ENCODE measurements at regions of chr10 and their contacts with region 1.

Region 1: GRCh38 chr10:133124357-133125211 is 35.4 kb upstream of the KNDC1 start:
- DNase-seq: peak; percentile 53 to 69
- H3K4me3 ChIP-seq: no peak overlapping the region
- H3K27ac ChIP-seq: no peak overlapping the region
- H3K4me1 ChIP-seq: peaks cover 0 to 6% (median 0%) of the 10 kb centered on the region in 4 donors
- H3K27me3 ChIP-seq: peaks cover 0 to 53% (median 20%) of the 10 kb centered on the region in 3 donors
- CTCF ChIP-seq: peak in 5 of 7 experiments; percentile 26 to 56 (median 41)
- EP300 ChIP-seq: no peak
- POLR2A ChIP-seq: no peak

Region 2: DNA sequence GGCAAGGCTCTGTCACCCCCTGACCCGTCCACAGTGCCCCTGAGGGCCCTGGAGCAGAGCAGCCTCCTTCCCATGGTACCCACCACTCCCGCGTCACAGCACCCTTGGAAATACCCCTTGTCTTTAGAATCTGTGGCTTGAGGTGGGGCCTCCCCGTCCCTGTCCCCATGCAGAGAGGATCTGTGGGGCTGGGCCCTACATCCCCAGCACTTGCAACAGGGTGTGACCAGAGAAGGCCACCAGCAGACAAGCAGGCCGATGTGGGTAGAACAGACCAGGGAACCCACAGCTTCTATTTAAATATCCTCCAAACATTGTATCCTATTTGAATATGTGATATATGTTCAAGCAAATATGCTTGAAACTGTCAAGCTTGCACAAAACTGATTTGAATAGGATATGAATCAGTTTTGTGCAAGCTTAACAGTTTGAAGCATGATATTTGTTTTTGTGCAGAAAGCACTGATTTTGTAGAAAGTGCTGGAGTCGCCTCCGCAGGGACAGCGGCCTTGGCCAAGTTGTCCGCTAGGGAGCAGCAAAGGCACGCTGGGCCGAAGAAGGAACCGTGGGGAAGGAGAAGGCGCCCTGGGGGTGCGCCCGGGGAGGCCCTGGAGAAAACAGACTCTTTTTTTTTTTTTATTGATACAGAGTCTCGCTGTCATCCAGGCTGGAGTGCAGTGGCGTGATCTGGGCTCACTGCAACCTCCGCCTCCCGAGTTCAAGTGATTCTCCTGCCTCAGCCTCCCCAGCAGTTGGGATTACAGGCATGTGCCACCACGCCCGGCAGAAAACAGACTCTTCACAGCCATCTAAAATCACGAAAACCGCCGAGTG is 184.4 kb before region 1 on chr10:
- intact Hi-C with region 1: loop called (anchors 10 kb)
- DNase-seq: peak; percentile 43 to 78
- H3K4me3 ChIP-seq: no peak overlapping the region
- H3K27ac ChIP-seq: no peak overlapping the region
- H3K4me1 ChIP-seq: peaks cover 6 to 19% (median 18%) of the 10 kb centered on the region in 4 donors
- H3K27me3 ChIP-seq: peaks cover 3 to 68% (median 34%) of the 10 kb centered on the region in 3 donors
- CTCF ChIP-seq: peak in 5 of 7 experiments; percentile 15 to 64 (median 43)
- EP300 ChIP-seq: no peak
- POLR2A ChIP-seq: no peak

Region 3: GRCh38 chr10:133009222-133009954 is 115.2 kb before region 1 on chr10:
- intact Hi-C with region 1: no loop called
- DNase-seq: peak; percentile 76 to 78
- H3K4me3 ChIP-seq: no peak overlapping the region
- H3K27ac ChIP-seq: peak overlapping the region in 4 of 5 donors; percentile 19 to 77 (median 72)
- H3K4me1 ChIP-seq: peaks cover 0 to 34% (median 15%) of the 10 kb centered on the region in 4 donors
- H3K27me3 ChIP-seq: peaks cover 0 to 26% (median 0%) of the 10 kb centered on the region in 3 donors
- CTCF ChIP-seq: no peak
- EP300 ChIP-seq: no peak
- POLR2A ChIP-seq: no peak

Region 4: DNA sequence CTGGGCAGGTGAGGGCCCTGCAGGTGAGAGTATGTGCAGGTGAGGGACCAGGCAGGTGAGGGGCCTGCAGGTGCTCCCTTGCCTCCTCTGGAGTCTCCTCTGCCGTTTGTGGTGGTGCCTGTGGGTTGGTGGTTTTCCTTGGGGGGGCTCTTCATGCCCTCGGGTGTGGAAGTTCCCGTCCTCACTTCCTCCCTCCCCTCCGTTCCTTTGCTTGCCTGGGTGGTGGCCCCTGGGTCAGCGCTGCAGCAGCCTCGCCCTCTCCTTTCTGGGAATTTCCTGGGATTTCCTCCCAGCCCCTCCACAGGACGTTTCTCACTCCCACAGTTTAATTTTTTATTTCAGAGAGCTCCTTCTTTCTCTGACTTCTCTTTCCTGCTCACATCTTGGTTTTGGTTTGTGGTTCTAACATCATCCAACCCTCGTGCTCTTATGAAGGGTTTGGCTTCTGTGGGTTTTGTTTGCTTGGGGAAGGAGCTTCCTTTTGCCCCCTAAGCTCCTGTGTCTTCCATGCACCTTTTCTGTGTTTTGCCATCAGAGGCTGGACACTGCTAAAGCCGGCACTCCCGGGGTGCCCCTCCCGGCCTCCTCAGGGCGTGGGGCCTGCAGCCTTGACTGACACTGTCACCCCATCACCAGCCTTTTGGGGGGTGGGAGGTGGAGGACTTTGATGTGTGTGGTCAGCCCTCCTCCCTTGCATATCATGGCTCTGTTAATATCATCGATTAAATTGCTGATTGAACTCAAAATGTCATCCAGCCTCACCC is 66.1 kb before region 1 on chr10:
- intact Hi-C with region 1: no loop called
- DNase-seq: no peak
- H3K4me3 ChIP-seq: no peak overlapping the region
- H3K27ac ChIP-seq: no peak overlapping the region
- H3K4me1 ChIP-seq: no peaks in the 10 kb centered on the region
- H3K27me3 ChIP-seq: peaks cover 0 to 73% (median 7%) of the 10 kb centered on the region in 3 donors
- CTCF ChIP-seq: no peak
- EP300 ChIP-seq: no peak
- POLR2A ChIP-seq: no peak

Measured in stomach (tissue), 19 donors.